MCF 10A (cell line): ENCODE measurements at regions of chrX and their contacts with region 1.

Region 1: DNA sequence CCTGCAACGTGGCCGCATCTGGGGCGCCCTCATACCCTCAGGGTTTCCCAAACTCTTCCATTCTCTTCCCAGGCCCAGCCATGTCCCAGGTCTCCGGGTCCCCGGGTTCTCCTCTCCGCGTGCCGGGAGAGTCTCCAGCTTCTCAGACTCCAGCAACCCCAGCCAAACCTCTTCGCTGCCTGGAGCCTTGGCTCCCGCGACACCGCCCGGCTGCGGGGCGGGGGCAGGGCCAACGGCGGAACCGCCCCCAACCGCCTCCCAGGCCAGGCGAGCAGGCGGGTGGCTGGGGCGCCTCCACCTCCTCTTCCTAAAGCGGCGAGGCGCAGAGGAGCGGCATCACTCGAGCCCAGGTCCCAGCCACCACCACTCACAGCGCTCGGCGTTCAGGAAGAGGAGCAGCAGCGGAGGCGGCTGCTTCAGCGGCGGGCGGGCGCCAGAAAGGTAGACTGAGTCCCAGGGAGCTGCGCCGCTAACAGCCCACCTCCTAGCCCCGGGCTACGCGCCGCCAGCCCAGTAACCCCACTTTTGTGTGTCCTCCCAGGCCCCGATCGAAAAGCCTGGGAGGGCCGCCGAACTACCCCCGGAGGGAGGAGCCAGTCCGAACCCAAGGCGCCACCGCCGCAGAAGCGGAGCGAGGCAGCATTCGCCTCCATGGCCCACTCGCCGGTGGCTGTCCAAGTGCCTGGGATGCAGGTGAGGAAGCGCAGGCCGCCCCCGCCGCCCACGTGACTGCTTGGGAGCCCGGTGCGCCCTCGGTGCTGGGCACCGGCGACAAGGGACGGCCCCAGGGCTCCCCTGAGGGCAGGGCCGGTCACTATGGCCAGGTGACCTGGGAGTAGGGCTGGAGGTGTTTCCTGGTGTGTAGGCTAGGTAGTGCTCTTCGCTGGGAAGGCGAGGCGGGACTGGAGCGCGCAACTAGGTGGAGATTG is at the start of gene STK26:
- DNase-seq: peak; percentile 82
- H3K4me3 Mint-ChIP-seq: peak within 1 kb of the TSS; percentile 85
- H3K27ac Mint-ChIP-seq: peak within 1 kb of the TSS; percentile 80
- H3K4me1 Mint-ChIP-seq: peaks cover 6% of the 10 kb centered on the region
- H3K27me3 Mint-ChIP-seq: peaks cover 34% of the 10 kb centered on the region
- CTCF ChIP-seq: no peak
- total RNA-seq, gene STK26: 17.5 and 18.2 TPM in 2 replicates

Region 2: GRCh38 chrX:132041015-132041414 is 17.8 kb after region 1 on chrX:
- CTCF ChIA-PET with region 1: interaction called, 4 read pairs
- POLR2A ChIA-PET with region 1: interaction called, 18 read pairs
- intact Hi-C with region 1: no loop called
- DNase-seq: peak; percentile 35
- H3K4me3 Mint-ChIP-seq: no peak overlapping the region
- H3K27ac Mint-ChIP-seq: peak overlapping the region; percentile 33
- H3K4me1 Mint-ChIP-seq: peaks cover 6% of the 10 kb centered on the region
- H3K27me3 Mint-ChIP-seq: peaks cover 58% of the 10 kb centered on the region
- CTCF ChIP-seq: no peak

Region 3: DNA sequence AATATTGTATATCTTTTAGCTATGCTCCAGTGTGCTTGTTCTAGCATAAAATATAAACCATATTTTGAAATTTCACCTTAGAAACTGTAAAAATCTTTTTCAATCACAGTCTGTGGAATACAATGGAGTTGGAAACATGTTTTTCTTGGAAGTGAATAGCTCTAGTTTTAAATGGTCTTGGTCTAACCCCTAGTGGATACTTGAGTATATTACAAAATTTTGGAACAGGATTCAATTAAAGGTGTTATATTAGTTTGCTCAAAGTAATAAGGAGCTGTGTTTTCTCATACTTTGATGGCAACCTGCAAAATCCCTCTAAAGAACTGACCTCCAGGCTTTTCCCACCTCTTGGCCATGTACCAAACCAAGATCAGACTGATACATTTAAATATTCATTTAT is 48.0 kb after region 1 on chrX:
- CTCF ChIA-PET with region 1: interaction called, 6 read pairs
- POLR2A ChIA-PET with region 1: interaction called, 5 read pairs
- intact Hi-C with region 1: loop called (anchors 1 kb)
- DNase-seq: peak; percentile 20
- H3K4me3 Mint-ChIP-seq: no peak overlapping the region
- H3K27ac Mint-ChIP-seq: no peak overlapping the region
- H3K4me1 Mint-ChIP-seq: no peaks in the 10 kb centered on the region
- H3K27me3 Mint-ChIP-seq: peaks cover 11% of the 10 kb centered on the region
- CTCF ChIP-seq: peak; percentile 19

Region 4: GRCh38 chrX:132219343-132219768 is 196.1 kb after region 1 on chrX and contains the start of gene RAP2C:
- CTCF ChIA-PET with region 1: interaction called, 3 read pairs
- POLR2A ChIA-PET with region 1: interaction called, 9 read pairs
- intact Hi-C with region 1: loop called (anchors 1 kb)
- DNase-seq: peak; percentile 78
- H3K4me3 Mint-ChIP-seq: peak within 1 kb of the TSS; percentile 80
- H3K27ac Mint-ChIP-seq: peak within 1 kb of the TSS; percentile 72
- H3K4me1 Mint-ChIP-seq: peaks cover 7% of the 10 kb centered on the region
- H3K27me3 Mint-ChIP-seq: peaks cover 66% of the 10 kb centered on the region
- CTCF ChIP-seq: peak; percentile 48
- total RNA-seq, gene RAP2C: 36.3 and 37.0 TPM in 2 replicates